K562 (cell line): ENCODE measurements at regions of chr10 and their contacts with region 1.

Region 1: DNA sequence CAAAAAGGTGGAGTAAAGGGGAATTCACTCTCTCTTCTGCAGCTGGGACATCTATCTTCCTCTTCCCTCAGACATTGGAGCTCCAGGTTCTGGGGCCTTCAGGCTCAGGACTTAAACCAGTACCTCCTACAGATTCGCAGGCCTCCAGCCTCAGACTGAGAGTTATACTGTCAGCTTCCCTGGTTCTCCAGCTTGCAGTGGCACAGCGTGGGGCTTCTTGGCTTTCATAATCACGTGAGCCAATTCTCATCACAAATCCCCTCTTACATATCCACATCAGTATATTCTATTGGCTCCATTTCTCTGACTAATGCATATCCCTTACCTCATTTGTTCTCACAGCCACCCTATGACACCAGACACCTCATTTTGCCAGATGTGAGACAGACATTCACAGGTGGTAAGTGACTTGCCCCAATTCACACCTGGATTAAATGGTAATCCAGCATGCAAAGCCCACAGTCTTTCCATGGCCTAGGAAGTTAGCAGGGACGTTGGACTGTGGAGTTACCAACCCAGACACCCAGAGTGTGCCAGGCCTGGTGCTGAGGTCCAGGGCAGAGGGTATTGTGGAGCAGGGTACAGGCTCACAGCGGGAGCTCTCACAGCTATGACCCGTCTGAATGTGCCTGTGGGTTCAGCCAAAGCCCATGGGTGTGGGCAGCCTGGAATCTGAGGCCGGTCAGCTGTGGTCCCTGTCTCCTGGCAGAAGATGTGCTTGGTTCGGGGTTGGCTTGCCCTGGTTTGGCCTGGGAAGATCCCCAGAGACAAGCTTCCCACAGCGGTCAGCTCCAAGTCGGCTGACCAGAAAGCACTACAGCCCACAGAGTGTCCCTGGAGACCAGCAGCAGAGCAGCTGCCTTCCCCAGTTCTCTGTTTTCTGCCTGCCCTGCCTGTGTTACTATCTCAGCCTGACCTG is 18.4 kb upstream of the ZCCHC24 start:
- DNase-seq: no peak
- ATAC-seq: no peak
- H3K4me3 ChIP-seq: no peak overlapping the region
- H3K27ac ChIP-seq: no peak overlapping the region
- H3K4me1 ChIP-seq: peaks cover 6 to 17% of the 10 kb centered on the region in 2 experiments; a peak in 3 of 5 replicates
- H3K27me3 ChIP-seq: peaks cover 2 to 19% of the 10 kb centered on the region in 2 experiments; a peak in 3 of 5 replicates
- CTCF ChIP-seq: no peak
- EP300 ChIP-seq: no peak
- POLR2A ChIP-seq: no peak
- RAD21 ChIP-seq: no peak

Region 2: GRCh38 chr10:79374312-79375191 is 89.3 kb before region 1 on chr10:
- CTCF ChIA-PET with region 1: interaction called, 22 read pairs
- POLR2A ChIA-PET with region 1: interaction called, 3 read pairs
- in situ Hi-C with region 1: no loop called
- intact Hi-C with region 1: loop called (anchors 1 kb)
- DNase-seq: peak; percentile 87 to 88 (median 88)
- ATAC-seq: peak; percentile 97
- H3K4me3 ChIP-seq: no peak overlapping the region
- H3K27ac ChIP-seq: no peak overlapping the region
- H3K4me1 ChIP-seq: peaks cover 8 to 9% of the 10 kb centered on the region in 2 experiments; a peak in 4 of 5 replicates
- H3K27me3 ChIP-seq: peaks cover 0 to 8% of the 10 kb centered on the region in 2 experiments; a peak in 2 of 5 replicates
- CTCF ChIP-seq: peak; percentile 97 to 99 (median 97)
- EP300 ChIP-seq: no peak
- POLR2A ChIP-seq: no peak
- RAD21 ChIP-seq: peak; percentile 99

Region 3: DNA sequence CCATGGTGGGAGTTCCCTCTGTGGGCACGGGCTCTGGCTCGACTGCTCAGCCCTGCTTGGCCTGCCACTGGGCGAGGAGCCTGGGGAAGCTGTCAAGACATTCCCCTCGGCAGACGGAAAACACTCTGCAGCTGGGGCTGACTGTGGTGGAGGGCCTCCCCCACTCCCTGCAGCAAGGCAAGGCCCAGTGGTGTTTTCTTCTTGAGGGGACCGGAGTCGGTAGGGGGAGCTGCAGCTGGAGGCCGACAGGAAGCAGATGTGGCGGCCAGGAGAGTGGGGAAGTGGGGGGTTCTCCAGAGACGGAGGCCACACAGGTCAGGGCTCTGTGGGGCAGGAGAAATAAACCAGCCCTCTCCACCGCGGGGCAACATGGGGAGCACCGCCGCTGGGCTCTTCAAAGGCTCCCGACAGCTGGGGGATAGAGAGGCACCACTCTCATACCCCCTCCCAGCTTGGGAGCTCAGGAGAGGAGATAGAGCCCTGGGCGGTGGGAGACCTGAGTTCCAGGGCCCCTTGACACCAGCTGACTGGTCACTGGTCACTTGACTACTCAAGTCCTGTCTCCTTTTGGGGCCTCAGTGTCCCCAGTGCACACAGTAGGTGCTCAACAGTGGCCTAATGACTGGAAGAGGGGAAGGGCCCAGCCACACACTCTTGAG is 73.2 kb before region 1 on chr10:
- CTCF ChIA-PET with region 1: interaction called, 5 read pairs
- POLR2A ChIA-PET with region 1: interaction called, 4 read pairs
- in situ Hi-C with region 1: no loop called
- intact Hi-C with region 1: loop called (anchors 2 kb)
- DNase-seq: peak; percentile 86 to 91 (median 88)
- ATAC-seq: peak; percentile 83
- H3K4me3 ChIP-seq: peak overlapping the region; percentile 9
- H3K27ac ChIP-seq: peak overlapping the region; percentile 83
- H3K4me1 ChIP-seq: peaks cover 47 to 61% of the 10 kb centered on the region in 2 experiments
- H3K27me3 ChIP-seq: no peaks in the 10 kb centered on the region
- CTCF ChIP-seq: peak; percentile 83 to 86 (median 84)
- EP300 ChIP-seq: no peak
- POLR2A ChIP-seq: peak; percentile 70
- RAD21 ChIP-seq: peak; percentile 39 to 61

Region 4: GRCh38 chr10:79400146-79401004 is 63.5 kb before region 1 on chr10:
- CTCF ChIA-PET with region 1: no interaction called
- POLR2A ChIA-PET with region 1: no interaction called
- in situ Hi-C with region 1: no loop called
- intact Hi-C with region 1: loop called (anchors 2 kb)
- DNase-seq: peak; percentile 86 to 89 (median 87)
- ATAC-seq: peak; percentile 90
- H3K4me3 ChIP-seq: no peak overlapping the region
- H3K27ac ChIP-seq: no peak overlapping the region
- H3K4me1 ChIP-seq: peaks cover 44 to 63% of the 10 kb centered on the region in 2 experiments
- H3K27me3 ChIP-seq: no peaks in the 10 kb centered on the region
- CTCF ChIP-seq: peak; percentile 91 to 98 (median 93)
- EP300 ChIP-seq: no peak
- POLR2A ChIP-seq: no peak
- RAD21 ChIP-seq: peak; percentile 55 to 88

Region 5: DNA sequence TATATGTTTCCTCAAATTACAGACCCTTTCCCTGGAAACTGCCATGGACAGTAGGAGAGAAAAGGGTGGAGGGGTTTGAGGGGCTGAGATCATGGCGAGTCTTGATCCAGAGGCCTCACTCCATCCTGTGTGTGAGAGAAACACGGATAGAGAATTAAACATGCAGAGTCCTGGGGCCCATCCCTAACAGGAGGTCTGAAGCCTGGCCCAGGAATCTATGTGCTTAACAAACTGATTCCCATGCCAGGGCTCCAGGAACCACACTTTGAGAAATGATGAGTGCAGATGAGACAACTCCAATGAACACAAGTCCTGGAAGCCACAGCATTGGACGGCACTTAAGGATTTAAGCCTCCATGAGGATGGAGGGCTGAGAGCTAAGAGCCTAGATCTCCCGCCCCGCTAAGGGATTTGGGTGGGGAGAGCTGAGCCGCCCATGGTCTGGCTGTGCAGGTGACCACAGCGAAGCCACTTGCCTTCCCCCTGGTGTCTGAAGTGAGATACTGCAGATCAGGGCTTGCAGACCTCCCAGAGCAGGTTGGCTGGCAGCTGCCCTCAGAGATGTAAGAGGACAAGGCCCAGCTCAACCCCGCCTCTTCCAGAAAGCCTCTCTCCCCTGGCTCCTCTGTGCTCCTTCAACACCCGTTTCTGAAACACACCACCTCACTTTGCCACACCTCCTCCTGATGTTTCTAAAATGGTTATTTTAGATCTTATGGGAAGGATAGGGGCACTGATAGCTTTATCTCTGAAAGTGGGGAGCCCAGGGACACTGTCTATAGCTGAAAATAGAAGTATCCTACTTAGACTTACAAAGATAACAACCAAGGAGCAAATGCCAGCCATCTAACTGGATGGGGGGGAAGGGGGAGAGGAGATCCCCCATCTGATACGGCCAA is 23.7 kb after region 1 on chr10:
- CTCF ChIA-PET with region 1: interaction called, 3 read pairs
- POLR2A ChIA-PET with region 1: no interaction called
- in situ Hi-C with region 1: no loop called
- intact Hi-C with region 1: loop called (anchors 2 kb)
- DNase-seq: peak; percentile 81 to 84 (median 83)
- ATAC-seq: peak; percentile 94
- H3K4me3 ChIP-seq: no peak overlapping the region
- H3K27ac ChIP-seq: no peak overlapping the region
- H3K4me1 ChIP-seq: peaks cover 7 to 14% of the 10 kb centered on the region in 2 experiments
- H3K27me3 ChIP-seq: peaks cover 3 to 6% of the 10 kb centered on the region in 2 experiments; a peak in 1 of 5 replicates
- CTCF ChIP-seq: peak; percentile 92 to 97 (median 94)
- EP300 ChIP-seq: no peak
- POLR2A ChIP-seq: no peak
- RAD21 ChIP-seq: peak; percentile 81 to 95

Region 6: DNA sequence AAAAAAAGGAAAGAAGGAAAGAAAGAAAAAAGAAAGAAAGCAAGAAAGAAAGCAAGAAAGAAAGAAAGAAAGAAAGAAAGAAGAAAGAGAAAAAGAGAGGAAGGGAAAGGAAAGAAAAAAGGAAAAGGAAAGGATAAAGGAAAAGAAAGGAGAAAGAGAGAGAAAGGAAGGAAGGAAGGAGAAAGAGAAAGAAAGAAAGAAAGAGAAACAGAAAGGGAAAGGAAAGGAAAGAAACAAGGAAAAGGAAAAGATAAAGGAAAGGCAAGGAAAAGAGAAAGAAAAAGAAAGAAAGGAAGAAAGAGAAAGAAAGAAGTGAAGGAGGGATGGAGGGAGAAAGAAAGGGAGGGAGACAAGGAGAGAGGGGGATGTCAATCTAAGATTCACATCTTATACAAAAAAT is 117.2 kb after region 1 on chr10:
- CTCF ChIA-PET with region 1: no interaction called
- POLR2A ChIA-PET with region 1: no interaction called
- in situ Hi-C with region 1: no loop called
- intact Hi-C with region 1: no loop called
- DNase-seq: no peak
- ATAC-seq: no peak
- H3K4me3 ChIP-seq: no peak overlapping the region
- H3K27ac ChIP-seq: no peak overlapping the region
- H3K4me1 ChIP-seq: no peaks in the 10 kb centered on the region
- H3K27me3 ChIP-seq: peaks cover 0 to 20% of the 10 kb centered on the region in 2 experiments; a peak in 3 of 5 replicates
- CTCF ChIP-seq: no peak
- EP300 ChIP-seq: no peak
- POLR2A ChIP-seq: no peak
- RAD21 ChIP-seq: no peak